ENCODE measurements at regions of chr13 and their contacts with region 1.

Region 1: GRCh38 chr13:21638319-21639282 is 32.3 kb upstream of the FGF9 start:
- DNase-seq: peak; percentile 48
- CTCF ChIP-seq: peak; percentile 62

Region 2: DNA sequence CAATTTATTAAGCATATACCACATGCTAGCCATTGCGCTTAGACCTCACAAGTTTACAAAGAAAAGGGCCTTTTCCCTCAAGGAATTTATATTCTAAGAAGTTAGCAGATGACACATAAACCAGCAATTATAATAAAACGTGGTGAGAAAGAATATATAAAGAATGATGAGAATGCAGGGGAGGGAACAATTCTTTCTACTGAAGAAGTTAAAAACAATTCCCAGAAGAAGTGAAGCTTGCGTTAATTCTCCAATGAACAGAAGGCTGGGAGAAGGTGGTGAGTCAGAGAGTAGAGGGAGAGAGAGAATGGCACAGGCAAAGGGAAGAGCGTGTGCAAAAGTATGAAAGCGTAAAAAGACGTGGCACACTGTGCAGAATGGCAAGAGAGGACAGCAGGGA is 110.0 kb before region 1 on chr13:
- in situ Hi-C with region 1: no loop called
- DNase-seq: no peak
- CTCF ChIP-seq: no peak

Region 3: DNA sequence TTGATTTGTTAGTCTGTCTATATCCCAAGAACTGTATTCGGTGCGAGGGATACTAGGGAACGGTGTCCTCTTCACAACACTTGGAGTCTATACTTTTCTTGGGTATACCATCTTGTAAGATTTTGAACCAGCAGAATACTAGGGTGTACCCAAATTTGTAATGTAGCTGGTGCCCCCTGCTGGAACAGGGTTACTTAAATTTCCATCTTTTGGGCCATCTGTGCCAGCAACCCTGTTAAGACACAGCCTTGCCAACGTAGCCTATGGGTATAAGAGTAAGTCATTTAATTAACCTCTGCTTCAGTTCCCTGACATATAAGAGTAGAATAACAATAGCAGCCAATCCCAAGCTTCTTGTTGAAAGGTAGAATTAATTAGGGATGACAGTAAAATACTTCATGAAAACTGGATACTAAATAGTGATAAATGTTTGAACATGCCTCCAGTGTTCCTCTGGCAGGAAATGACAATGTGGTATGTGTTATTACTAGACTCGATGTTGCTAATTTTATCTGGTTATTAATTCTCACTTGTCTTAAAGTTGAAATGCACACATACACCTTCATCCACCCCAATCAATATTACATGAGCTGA is 639.8 kb after region 1 on chr13:
- in situ Hi-C with region 1: loop called (anchors 25 kb)
- DNase-seq: peak; percentile 33
- CTCF ChIP-seq: peak; percentile 63

Region 4: DNA sequence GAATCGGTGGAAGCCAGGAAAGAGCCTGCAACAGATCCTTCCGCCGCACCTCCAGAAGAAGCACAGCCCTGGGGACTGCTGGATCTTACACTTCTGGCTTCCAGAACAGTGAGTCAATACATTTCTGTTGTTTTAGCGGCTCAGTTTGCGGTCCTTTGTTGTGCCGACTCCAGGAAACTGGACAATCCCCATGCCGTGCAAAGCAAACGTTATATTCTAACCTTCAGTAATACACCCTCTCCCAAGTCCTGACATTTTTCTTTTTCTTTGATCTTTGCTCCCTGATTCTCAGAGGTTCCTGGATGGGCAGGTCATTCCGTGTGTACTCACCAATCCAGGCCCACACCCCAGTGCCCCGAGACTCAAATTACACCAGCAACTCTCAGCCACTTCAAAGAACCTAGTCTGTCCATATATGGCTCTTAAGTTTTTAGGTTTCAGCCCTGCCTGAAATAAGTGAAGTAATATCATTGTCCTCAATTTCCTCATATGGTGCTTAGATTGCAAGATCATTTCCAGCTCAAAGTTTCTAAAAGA is 1155.1 kb after region 1 on chr13:
- in situ Hi-C with region 1: loop called (anchors 25 kb)
- DNase-seq: no peak
- CTCF ChIP-seq: no peak

Region 5: GRCh38 chr13:23025864-23026608 is 1387.4 kb after region 1 on chr13:
- in situ Hi-C with region 1: loop called (anchors 25 kb)
- DNase-seq: no peak
- CTCF ChIP-seq: no peak